PC-3 (cell line): ENCODE measurements at regions of chr17 and their contacts with region 1.

Region 1: GRCh38 chr17:7716901-7717755 is at the start of gene DNAH2:
- DNase-seq: peak; percentile 65
- ATAC-seq: peak; percentile 86
- H3K4me3 ChIP-seq: peak within 1 kb of the TSS; percentile 84
- H3K27ac ChIP-seq: no peak within 1 kb of the TSS
- H3K4me1 ChIP-seq: peaks cover 7% of the 10 kb centered on the region
- H3K27me3 ChIP-seq: no peaks in the 10 kb centered on the region
- CTCF ChIP-seq: peak; percentile 53
- total RNA-seq, gene DNAH2: 0.62 and 0.92 TPM in 2 replicates

Region 2: GRCh38 chr17:7729816-7730215 is 12.7 kb after region 1 on chr17:
- CTCF ChIA-PET with region 1: interaction called, 19 read pairs
- POLR2A ChIA-PET with region 1: no interaction called
- intact Hi-C with region 1: no loop called
- DNase-seq: no peak
- ATAC-seq: no peak
- H3K4me3 ChIP-seq: no peak overlapping the region
- H3K27ac ChIP-seq: no peak overlapping the region
- H3K4me1 ChIP-seq: no peaks in the 10 kb centered on the region
- H3K27me3 ChIP-seq: no peaks in the 10 kb centered on the region
- CTCF ChIP-seq: no peak

Region 3: GRCh38 chr17:8542599-8543502 is 825.7 kb after region 1 on chr17:
- CTCF ChIA-PET with region 1: no interaction called
- POLR2A ChIA-PET with region 1: no interaction called
- intact Hi-C with region 1: no loop called
- DNase-seq: peak; percentile 67
- ATAC-seq: peak; percentile 48
- H3K4me3 ChIP-seq: no peak overlapping the region
- H3K27ac ChIP-seq: 0 out of 2 replicates have a peak overlapping the region, but pooled peaks have one; percentile 11
- H3K4me1 ChIP-seq: peaks cover 5% of the 10 kb centered on the region; the same call in 1 of the 2 replicates
- H3K27me3 ChIP-seq: no peaks in the 10 kb centered on the region
- CTCF ChIP-seq: no peak